ENCODE measurements at regions of chr17 and their contacts with region 1.

Region 1: DNA sequence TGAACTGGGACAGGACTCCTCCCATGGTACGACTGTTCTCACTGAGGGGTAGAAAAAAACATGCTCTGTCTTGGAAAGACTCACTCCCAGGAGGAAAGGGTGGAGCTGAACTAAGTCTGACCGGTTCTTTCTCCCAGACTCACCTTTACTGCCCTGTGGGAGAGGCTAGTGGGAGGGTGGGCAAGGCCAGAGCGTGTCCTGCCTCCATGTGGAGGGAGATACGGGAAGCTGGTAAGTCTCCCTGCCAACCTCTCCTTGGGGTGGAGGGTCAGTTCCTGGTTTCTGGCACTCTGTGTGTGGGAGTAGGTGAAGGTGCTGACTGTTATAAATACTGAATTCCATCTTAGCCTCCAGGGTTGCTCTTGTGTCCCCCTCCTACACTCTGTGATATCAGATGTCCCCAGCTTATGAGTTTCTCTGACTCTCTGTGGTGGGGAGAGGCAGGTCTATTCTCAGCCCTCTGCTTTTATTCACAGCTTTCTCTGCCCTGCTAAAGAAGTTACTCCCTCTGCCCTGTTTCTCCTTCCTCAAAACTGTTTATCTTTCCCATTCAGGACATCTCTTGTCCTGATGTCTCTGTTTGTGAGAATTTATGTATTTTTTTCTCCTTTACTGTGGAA is 26.9 kb upstream of the FAM20A start:
- DNase-seq: no peak
- ATAC-seq: no peak
- H3K4me3 ChIP-seq: no peak overlapping the region
- H3K4me3 Mint-ChIP-seq: no peak overlapping the region
- H3K27ac ChIP-seq: no peak overlapping the region
- H3K27ac Mint-ChIP-seq: no peak overlapping the region
- H3K4me1 ChIP-seq: no peaks in the 10 kb centered on the region
- H3K4me1 Mint-ChIP-seq: no peaks in the 10 kb centered on the region
- H3K27me3 ChIP-seq: peaks cover 0 to 3% of the 10 kb centered on the region in 2 experiments
- H3K27me3 Mint-ChIP-seq: peaks cover 7 to 16% of the 10 kb centered on the region in 2 donors

Region 2: DNA sequence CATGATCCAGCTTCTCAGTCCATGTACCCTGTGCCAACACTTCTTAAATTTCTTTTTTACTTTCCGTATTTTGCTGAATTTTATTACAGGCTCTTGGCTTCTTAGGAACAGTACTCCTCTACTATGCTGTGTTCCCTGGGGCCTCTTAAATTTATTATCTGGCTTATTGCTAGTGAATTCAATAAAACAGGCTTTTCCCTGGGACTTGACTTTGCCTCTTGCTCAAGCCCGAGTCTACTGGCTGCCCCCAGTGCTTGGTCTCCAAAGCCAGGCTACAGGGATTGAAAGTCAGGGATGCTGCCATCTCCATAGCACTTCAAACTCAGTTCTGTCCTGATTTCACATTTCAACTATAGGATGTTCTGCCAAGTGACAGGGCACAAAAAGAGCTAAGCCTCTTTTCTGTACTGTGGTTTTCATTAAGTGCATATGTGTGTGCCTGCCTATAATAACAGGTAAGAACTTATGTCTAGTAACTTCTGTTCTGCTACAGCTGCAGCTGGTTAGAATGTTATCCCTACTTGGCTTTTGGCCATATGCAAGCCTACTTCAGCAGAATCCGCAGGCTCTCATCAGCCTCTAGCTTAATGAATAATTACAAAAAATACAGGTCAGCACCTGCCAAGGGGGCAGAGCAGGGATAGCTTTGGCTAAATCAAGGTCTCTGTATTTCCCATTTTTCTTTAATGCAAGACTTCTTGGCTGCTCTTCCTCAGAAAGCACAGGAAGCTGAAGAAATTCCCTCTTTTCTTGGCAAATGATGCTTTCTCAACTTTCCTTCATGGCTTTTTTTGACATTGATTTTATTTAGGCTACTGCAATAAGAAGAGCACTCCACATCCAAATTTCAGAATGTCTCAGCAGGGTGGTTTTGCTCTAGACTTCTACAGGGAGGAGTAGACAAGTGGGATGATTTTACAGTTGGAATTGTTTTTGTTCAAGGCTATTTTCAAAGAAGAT is 35.1 kb before region 1 on chr17:
- CTCF ChIA-PET with region 1: no interaction called
- POLR2A ChIA-PET with region 1: interaction called in 1 of 2 experiments, 13 read pairs
- DNase-seq: no peak
- ATAC-seq: no peak
- H3K4me3 ChIP-seq: no peak overlapping the region
- H3K4me3 Mint-ChIP-seq: no peak overlapping the region
- H3K27ac ChIP-seq: no peak overlapping the region
- H3K27ac Mint-ChIP-seq: peak overlapping the region in 1 of 2 donors; percentile 10
- H3K4me1 ChIP-seq: peaks cover 3 to 8% of the 10 kb centered on the region in 2 experiments
- H3K4me1 Mint-ChIP-seq: peaks cover 10 to 16% (median 12%) of the 10 kb centered on the region in 3 donors
- H3K27me3 ChIP-seq: peaks cover 9 to 26% of the 10 kb centered on the region in 2 experiments
- H3K27me3 Mint-ChIP-seq: peaks cover 55 to 61% of the 10 kb centered on the region in 2 donors

Region 3: DNA sequence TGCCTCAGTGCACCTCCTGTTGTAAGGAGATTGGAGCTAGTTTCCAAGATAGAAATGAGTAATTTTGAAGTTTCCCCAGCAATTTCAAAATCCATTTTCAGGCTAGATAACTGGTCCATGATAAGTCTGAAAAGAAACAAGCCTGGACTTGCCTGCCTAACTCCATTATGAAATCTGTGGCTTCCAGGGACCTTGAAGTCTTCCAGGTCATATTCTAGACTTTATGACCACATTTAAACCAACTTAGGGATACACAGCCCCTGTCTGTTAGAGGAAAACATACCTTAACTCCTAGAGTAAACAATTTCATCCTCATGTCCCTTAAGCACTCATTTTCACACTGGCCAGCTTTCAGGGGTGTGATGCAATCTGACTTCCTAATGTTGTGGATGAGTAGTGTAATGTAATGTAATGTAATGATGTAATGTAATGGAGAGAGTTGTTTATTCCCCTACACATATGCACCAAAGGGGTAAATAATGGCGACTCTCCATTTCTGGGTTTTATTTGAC is 69.8 kb after region 1 on chr17:
- CTCF ChIA-PET with region 1: no interaction called
- POLR2A ChIA-PET with region 1: no interaction called
- DNase-seq: no peak
- ATAC-seq: no peak
- H3K4me3 ChIP-seq: no peak overlapping the region
- H3K4me3 Mint-ChIP-seq: no peak overlapping the region
- H3K27ac ChIP-seq: no peak overlapping the region
- H3K27ac Mint-ChIP-seq: no peak overlapping the region
- H3K4me1 ChIP-seq: no peaks in the 10 kb centered on the region
- H3K4me1 Mint-ChIP-seq: no peaks in the 10 kb centered on the region
- H3K27me3 ChIP-seq: peaks cover 0 to 8% of the 10 kb centered on the region in 2 experiments
- H3K27me3 Mint-ChIP-seq: peaks cover 5 to 17% of the 10 kb centered on the region in 2 donors

Measured in T-cell (primary cell).